Ascending aorta (tissue), 2 donors: ENCODE measurements at regions of chr4 and their contacts with region 1.

Region 1: DNA sequence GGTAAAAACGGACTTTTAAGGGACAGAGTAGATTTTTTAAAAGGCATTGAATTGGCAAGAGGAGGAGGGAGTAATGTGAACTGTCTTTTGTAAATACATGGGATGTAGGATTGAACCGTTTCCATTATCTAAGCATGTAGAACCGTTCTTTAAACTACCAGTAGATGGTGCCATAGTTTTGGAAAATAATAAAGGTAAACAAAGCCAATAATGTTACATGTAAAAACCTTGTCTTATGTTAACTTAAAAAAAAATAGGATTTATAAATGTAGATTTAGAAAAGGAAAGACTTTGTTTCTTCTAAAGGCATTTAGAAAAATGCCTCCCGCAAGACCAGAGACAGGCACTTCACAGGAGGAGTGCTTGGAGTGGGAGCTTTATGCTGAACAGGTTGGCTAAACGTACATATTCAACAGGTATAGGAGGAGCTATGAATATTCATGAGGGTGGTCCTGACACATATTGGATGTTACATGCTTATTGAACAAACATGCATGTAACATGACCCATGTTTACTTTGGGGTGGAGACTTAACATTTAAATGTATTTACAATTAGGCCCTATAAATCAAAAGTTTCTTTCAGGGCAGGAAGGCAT is 45.5 kb upstream of the FAM241A start:
- DNase-seq: no peak
- H3K4me3 ChIP-seq: no peak overlapping the region
- H3K27ac ChIP-seq: no peak overlapping the region
- H3K4me1 ChIP-seq: no peaks in the 10 kb centered on the region
- H3K27me3 ChIP-seq: no peaks in the 10 kb centered on the region
- CTCF ChIP-seq: peak; percentile 32 to 68 (median 63)

Region 2: GRCh38 chr4:111649308-111649707 is 450.5 kb before region 1 on chr4:
- intact Hi-C with region 1: no loop called
- DNase-seq: no peak
- H3K4me3 ChIP-seq: no peak overlapping the region
- H3K27ac ChIP-seq: no peak overlapping the region
- H3K4me1 ChIP-seq: no peaks in the 10 kb centered on the region
- H3K27me3 ChIP-seq: no peaks in the 10 kb centered on the region
- CTCF ChIP-seq: no peak

Region 3: DNA sequence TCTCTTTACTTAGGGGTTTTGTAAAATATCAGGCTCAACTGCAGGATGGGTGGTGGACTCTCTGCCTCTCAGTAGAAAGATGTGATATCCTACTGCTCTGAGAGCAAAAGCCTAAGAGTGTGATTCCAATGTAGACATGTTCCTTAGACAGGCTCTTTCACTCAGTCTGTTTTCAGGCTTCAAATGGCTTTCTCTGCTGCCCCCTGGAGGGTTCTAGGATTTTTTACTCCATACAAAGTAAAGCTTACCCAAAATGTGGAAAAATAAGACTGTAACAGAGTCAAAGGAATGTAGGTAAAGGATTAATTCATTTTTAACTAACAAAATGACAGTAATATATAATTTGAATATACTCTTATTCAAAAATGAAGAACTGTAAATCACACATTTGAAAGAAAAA is 504.8 kb after region 1 on chr4:
- intact Hi-C with region 1: loop called (anchors 2 kb)
- DNase-seq: no peak
- H3K4me3 ChIP-seq: no peak overlapping the region
- H3K27ac ChIP-seq: no peak overlapping the region
- H3K4me1 ChIP-seq: no peaks in the 10 kb centered on the region
- H3K27me3 ChIP-seq: no peaks in the 10 kb centered on the region
- CTCF ChIP-seq: peak; percentile 26 to 58 (median 37)